ENCODE measurements at regions of chr9 and their contacts with region 1.

Region 1: GRCh38 chr9:108565651-108566378 is 290.0 kb downstream of the ACTL7B start:
- DNase-seq: no peak
- ATAC-seq: peak; percentile 55
- H3K4me3 ChIP-seq: no peak overlapping the region
- H3K4me3 Mint-ChIP-seq: no peak overlapping the region
- H3K27ac ChIP-seq: no peak overlapping the region
- H3K27ac Mint-ChIP-seq: no peak overlapping the region
- H3K4me1 ChIP-seq: no peaks in the 10 kb centered on the region
- H3K4me1 Mint-ChIP-seq: no peaks in the 10 kb centered on the region
- H3K27me3 ChIP-seq: no peaks in the 10 kb centered on the region
- H3K27me3 Mint-ChIP-seq: peaks cover 0 to 19% (median 5%) of the 10 kb centered on the region in 5 donors

Region 2: GRCh38 chr9:107489687-107490605 is 1075.9 kb before region 1 on chr9 and contains the start of gene KLF4:
- CTCF ChIA-PET with region 1: no interaction called
- POLR2A ChIA-PET with region 1: no interaction called
- intact Hi-C with region 1: loop called in 1 of 2 experiments (anchors 5 kb)
- DNase-seq: peak in 7 of 9 donors; percentile 7 to 72 (median 23)
- ATAC-seq: peak; percentile 77
- H3K4me3 ChIP-seq: no peak within 1 kb of the TSS
- H3K4me3 Mint-ChIP-seq: peak within 1 kb of the TSS; percentile 59 to 85 (median 73)
- H3K27ac ChIP-seq: no peak within 1 kb of the TSS
- H3K27ac Mint-ChIP-seq: peak within 1 kb of the TSS in 1 of 9 donors; percentile 80
- H3K4me1 ChIP-seq: peaks cover 0 to 5% of the 10 kb centered on the region in 2 donors
- H3K4me1 Mint-ChIP-seq: peaks cover 5 to 28% (median 15%) of the 10 kb centered on the region in 7 donors
- H3K27me3 ChIP-seq: peaks cover 0 to 3% of the 10 kb centered on the region in 2 donors
- H3K27me3 Mint-ChIP-seq: peaks cover 56 to 71% (median 60%) of the 10 kb centered on the region in 5 donors
- total RNA-seq, gene KLF4: 0.29 to 266 (median 1.0) TPM

Region 3: DNA sequence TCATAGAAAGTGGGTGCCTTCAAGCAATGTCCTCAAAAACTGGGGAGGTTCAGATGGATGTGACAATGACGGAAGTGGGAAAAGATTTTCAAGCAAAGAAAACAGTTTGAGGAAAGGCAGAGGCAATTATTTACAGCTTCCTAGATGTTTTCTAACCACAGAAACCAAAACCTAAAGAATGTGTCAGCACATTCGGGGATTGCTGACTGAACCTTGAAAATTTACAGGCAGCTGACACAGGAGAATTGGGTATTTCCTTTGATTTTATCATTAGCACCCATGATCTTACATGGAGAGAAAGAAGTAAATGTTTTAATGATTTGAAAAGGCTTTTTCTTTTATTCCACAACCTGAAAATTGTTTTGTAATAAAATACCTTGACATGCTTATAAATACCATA is 79.0 kb before region 1 on chr9:
- CTCF ChIA-PET with region 1: no interaction called
- POLR2A ChIA-PET with region 1: no interaction called
- intact Hi-C with region 1: no loop called
- DNase-seq: no peak
- ATAC-seq: no peak
- H3K4me3 ChIP-seq: no peak overlapping the region
- H3K4me3 Mint-ChIP-seq: no peak overlapping the region
- H3K27ac ChIP-seq: no peak overlapping the region
- H3K27ac Mint-ChIP-seq: no peak overlapping the region
- H3K4me1 ChIP-seq: no peaks in the 10 kb centered on the region
- H3K4me1 Mint-ChIP-seq: peaks cover 0 to 3% (median 0%) of the 10 kb centered on the region in 7 donors
- H3K27me3 ChIP-seq: no peaks in the 10 kb centered on the region
- H3K27me3 Mint-ChIP-seq: peaks cover 0 to 10% (median 4%) of the 10 kb centered on the region in 5 donors

Region 4: GRCh38 chr9:108521063-108521590 is 44.7 kb before region 1 on chr9:
- CTCF ChIA-PET with region 1: no interaction called
- POLR2A ChIA-PET with region 1: no interaction called
- intact Hi-C with region 1: no loop called
- DNase-seq: no peak
- ATAC-seq: no peak
- H3K4me3 ChIP-seq: no peak overlapping the region
- H3K4me3 Mint-ChIP-seq: no peak overlapping the region
- H3K27ac ChIP-seq: no peak overlapping the region
- H3K27ac Mint-ChIP-seq: no peak overlapping the region
- H3K4me1 ChIP-seq: no peaks in the 10 kb centered on the region
- H3K4me1 Mint-ChIP-seq: no peaks in the 10 kb centered on the region
- H3K27me3 ChIP-seq: no peaks in the 10 kb centered on the region
- H3K27me3 Mint-ChIP-seq: peaks cover 0 to 5% (median 0%) of the 10 kb centered on the region in 5 donors

Measured in naive thymus-derived CD4-positive, alpha-beta T cell (primary cell).